Heart right ventricle (tissue), 16 donors: ENCODE measurements at regions of chr16 and their contacts with region 1.

Region 1: GRCh38 chr16:70638814-70639792 is 7.3 kb upstream of the IL34 start:
- DNase-seq: no peak
- ATAC-seq: peak in 6 of 8 donors; percentile 43 to 77 (median 68)
- H3K4me3 ChIP-seq: no peak overlapping the region
- H3K27ac ChIP-seq: no peak overlapping the region
- H3K4me1 ChIP-seq: peaks cover 0 to 10% (median 0%) of the 10 kb centered on the region in 9 donors
- H3K27me3 ChIP-seq: no peaks in the 10 kb centered on the region
- CTCF ChIP-seq: no peak

Region 2: DNA sequence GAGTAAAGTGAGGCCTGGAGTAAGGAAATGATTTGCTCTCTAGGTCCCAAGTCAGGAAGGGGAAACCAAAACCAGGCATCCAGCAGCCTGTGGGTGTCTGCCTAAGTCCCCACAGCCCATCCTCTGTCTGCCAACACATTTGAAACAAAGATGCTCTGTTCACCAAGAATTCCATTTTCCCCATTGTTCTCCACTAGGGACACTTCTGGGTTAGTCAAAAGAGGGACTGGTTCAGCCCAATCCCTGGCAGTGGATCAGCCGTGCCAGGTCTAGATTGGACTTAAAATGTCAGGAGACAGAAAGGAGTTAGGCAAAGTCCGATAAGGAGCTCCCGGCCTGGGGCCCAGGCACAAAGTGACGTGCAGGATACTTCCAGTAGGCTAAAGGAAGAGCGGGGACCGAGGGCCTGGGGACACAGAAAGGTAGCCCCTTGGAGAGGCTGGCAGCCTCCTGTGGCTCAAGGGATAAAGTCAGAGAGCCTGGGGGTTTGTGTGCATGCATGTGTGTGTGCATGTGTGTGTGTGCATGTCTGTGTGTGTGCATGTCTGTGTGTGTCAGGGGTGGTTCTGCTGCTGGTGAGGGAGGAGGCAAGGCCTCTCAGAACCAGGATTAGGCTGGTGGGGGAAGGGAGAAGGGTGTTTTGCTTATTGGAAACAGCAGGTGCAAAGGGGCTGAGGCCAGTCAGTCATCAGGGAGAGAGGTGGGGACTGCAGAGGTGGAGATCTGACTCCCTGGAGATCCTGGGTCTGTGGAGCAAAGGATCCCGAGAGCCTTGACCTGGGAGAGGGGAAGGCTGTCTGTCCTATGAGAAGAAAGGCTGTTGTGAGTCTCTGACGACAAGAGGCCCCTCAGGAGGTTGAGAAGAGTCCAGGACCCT is 34.5 kb before region 1 on chr16:
- intact Hi-C with region 1: loop called in 1 of 10 experiments (anchors 5 kb)
- DNase-seq: no peak
- ATAC-seq: no peak
- H3K4me3 ChIP-seq: no peak overlapping the region
- H3K27ac ChIP-seq: no peak overlapping the region
- H3K4me1 ChIP-seq: peaks cover 0 to 1% (median 0%) of the 10 kb centered on the region in 9 donors
- H3K27me3 ChIP-seq: no peaks in the 10 kb centered on the region
- CTCF ChIP-seq: no peak

Region 3: GRCh38 chr16:70800781-70801530 is 161.9 kb after region 1 on chr16 and contains the start of gene VAC14:
- intact Hi-C with region 1: no loop called
- DNase-seq: peak; percentile 85 to 89
- ATAC-seq: peak; percentile 95 to 98 (median 96)
- H3K4me3 ChIP-seq: peak within 1 kb of the TSS; percentile 71 to 96 (median 82)
- H3K27ac ChIP-seq: peak within 1 kb of the TSS in 6 of 10 donors; percentile 6 to 82 (median 27)
- H3K4me1 ChIP-seq: peaks cover 5 to 26% (median 16%) of the 10 kb centered on the region in 9 donors
- H3K27me3 ChIP-seq: peaks cover 0 to 8% (median 0%) of the 10 kb centered on the region in 7 donors
- CTCF ChIP-seq: no peak
- total RNA-seq, gene VAC14: 19.2 to 27.9 (median 22.7) TPM